Common myeloid progenitor, CD34-positive (primary cell): ENCODE measurements at regions of chr2 and their contacts with region 1.

Region 1: GRCh38 chr2:241702132-241703031 is 543 bp downstream of the ING5 start:
- DNase-seq: peak; percentile 91 to 95 (median 94)
- H3K4me3 ChIP-seq: peak overlapping the region; percentile 53 to 86 (median 77)
- H3K27ac ChIP-seq: peak overlapping the region in 1 of 2 experiments; percentile 83
- H3K4me1 ChIP-seq: peaks cover 0 to 17% (median 15%) of the 10 kb centered on the region in 4 experiments
- H3K27me3 ChIP-seq: no peaks in the 10 kb centered on the region

Region 2: DNA sequence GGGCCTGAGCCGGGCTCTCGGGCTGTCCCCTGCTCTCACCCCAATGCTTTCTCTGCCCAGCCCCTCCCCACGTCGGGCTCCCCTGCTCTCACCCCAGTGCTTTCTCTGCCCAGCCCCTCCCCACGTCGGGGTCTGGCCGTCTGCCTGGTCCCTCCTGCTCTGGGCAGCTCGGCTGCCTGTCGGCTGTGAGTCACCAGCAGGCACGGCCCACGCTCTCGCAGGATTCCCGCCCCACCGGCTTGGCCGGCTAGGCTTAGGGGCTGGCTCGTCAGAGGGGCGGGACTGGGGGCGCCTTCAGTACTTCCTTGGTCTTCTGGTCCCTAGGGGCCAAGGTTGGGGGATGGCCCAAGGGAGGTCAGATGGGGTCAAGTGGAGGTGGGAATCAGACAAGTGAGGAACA is 140.5 kb before region 1 on chr2:
- CTCF ChIA-PET with region 1: no interaction called
- POLR2A ChIA-PET with region 1: no interaction called
- DNase-seq: no peak
- H3K4me3 ChIP-seq: no peak overlapping the region
- H3K27ac ChIP-seq: no peak overlapping the region
- H3K4me1 ChIP-seq: peaks cover 0 to 13% (median 10%) of the 10 kb centered on the region in 4 experiments
- H3K27me3 ChIP-seq: peaks cover 0 to 53% (median 18%) of the 10 kb centered on the region in 5 experiments

Region 3: GRCh38 chr2:241686649-241687425 is 15.5 kb before region 1 on chr2 and contains the start of gene DTYMK:
- CTCF ChIA-PET with region 1: interaction called, 16 read pairs
- POLR2A ChIA-PET with region 1: interaction called, 16 read pairs
- DNase-seq: peak; percentile 94 to 97 (median 96)
- H3K4me3 ChIP-seq: peak within 1 kb of the TSS; percentile 86 to 98 (median 91)
- H3K27ac ChIP-seq: peak within 1 kb of the TSS; percentile 64 to 89
- H3K4me1 ChIP-seq: peaks cover 8 to 28% (median 23%) of the 10 kb centered on the region in 4 experiments
- H3K27me3 ChIP-seq: no peaks in the 10 kb centered on the region

Region 4: DNA sequence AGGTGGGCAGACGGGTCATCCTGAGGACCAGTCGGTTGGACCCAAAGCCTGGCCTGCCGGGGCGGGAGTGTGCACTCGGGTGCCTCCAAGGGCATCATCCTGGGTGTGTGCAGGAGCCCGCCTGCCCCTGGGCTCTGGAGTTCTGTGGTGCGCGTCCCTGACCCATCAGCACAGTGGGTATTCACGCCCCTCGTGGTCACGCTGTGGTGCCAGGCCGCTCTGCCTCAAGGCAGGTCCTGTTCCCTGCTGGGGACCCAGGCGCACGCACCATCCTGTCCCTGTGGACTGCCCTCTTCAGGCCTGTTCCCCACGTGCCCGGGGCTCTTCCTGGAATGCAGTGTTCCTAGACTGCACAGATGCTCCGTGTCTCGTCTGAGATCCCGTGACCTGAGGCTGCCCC is 17.7 kb after region 1 on chr2:
- CTCF ChIA-PET with region 1: interaction called, 11 read pairs
- POLR2A ChIA-PET with region 1: interaction called, 3 read pairs
- DNase-seq: no peak
- H3K4me3 ChIP-seq: no peak overlapping the region
- H3K27ac ChIP-seq: no peak overlapping the region
- H3K4me1 ChIP-seq: no peaks in the 10 kb centered on the region
- H3K27me3 ChIP-seq: no peaks in the 10 kb centered on the region

Region 5: DNA sequence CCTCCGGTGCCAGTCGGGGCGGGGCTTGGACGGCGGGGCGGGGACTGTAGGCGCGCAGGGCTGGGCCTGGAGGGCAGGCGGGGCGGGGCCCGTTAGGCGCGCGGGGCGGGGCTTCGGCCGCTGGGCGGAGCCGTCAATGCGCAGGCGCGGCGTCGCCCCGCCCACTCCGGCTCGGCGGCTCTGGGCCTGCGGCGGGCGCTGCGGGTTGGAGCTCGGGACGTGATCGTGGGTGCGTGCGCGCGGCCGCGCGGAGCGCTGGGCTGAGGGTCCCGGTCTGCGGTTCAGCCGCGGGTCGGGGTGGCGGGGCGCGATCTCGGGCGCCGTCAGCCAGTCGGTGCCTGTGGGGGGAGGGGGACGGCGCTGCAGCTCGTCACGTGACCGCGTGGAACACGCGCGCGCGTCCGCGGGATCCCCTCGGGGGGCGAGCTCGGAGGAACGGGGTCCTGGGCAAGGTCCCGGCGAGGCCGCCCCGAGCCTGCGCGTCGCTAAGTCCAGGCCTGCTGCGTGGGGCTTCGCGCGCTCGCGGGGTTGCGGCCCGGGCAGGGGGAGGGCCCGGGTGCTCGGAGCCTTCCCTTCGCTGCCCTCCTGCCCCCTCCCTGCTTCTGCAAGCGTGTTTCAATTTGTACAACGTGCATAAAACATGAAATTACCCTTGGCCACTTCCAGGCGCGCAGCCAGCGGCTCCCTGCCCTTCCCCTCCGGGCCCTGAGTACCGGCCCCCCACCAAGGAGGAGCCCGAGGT is 32.3 kb after region 1 on chr2 and contains the start of gene D2HGDH:
- CTCF ChIA-PET with region 1: interaction called, 60 read pairs
- POLR2A ChIA-PET with region 1: interaction called, 16 read pairs
- DNase-seq: peak; percentile 75 to 88 (median 87)
- H3K4me3 ChIP-seq: peak within 1 kb of the TSS; percentile 68 to 85 (median 80)
- H3K27ac ChIP-seq: peak within 1 kb of the TSS; percentile 25 to 78
- H3K4me1 ChIP-seq: peaks cover 0 to 47% (median 25%) of the 10 kb centered on the region in 4 experiments
- H3K27me3 ChIP-seq: no peaks in the 10 kb centered on the region